ENCODE measurements at regions of chr3 and their contacts with region 1.

Region 1: GRCh38 chr3:172675441-172676193 is 35.2 kb downstream of the NCEH1 start:
- DNase-seq: no peak
- H3K4me3 ChIP-seq: no peak overlapping the region
- H3K27ac ChIP-seq: no peak overlapping the region
- H3K4me1 ChIP-seq: peaks cover 0 to 27% (median 11%) of the 10 kb centered on the region in 4 donors
- H3K27me3 ChIP-seq: no peaks in the 10 kb centered on the region
- CTCF ChIP-seq: peak; percentile 67 to 81 (median 78)
- EP300 ChIP-seq: no peak
- POLR2A ChIP-seq: no peak

Region 2: DNA sequence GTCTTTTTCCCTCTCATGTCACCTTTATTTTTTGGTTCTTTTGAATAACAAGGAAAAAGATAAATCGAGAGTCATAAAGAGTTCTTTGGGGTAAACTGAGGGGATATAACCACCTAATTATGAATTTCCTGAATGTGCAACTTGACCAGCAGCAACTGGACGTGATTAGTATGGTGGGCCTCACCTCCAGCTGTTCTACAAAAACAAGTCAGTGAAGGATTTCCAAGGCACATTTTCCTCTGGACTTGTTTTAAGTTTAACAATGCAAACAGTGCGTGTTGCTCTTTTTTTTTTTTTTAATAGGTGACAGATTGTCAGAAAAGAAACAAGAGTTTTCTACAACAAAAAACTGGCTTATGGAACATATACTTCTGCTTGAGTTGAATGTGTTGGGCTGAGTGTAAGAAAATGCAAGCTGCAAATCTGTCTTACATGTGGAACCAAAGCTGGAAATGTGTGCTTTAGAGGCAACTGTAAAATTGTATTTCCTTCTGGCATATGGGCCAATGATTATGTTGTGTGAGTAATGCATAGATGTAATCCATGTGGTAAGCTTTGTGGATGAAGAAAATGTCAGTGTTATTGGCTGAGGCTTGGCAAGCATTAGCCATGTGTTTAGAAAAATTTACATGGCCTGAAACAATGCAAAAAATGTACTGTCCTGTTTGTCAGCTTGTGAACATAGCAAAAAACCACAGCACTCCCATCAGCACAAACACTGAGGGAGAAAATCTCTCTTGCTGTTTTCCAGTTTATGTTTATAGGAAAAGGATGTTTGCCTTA is 680.8 kb before region 1 on chr3:
- in situ Hi-C with region 1: no loop called
- intact Hi-C with region 1: no loop called
- DNase-seq: no peak
- H3K4me3 ChIP-seq: no peak overlapping the region
- H3K27ac ChIP-seq: no peak overlapping the region
- H3K4me1 ChIP-seq: peaks cover 0 to 10% (median 2%) of the 10 kb centered on the region in 4 donors
- H3K27me3 ChIP-seq: no peaks in the 10 kb centered on the region
- CTCF ChIP-seq: no peak
- EP300 ChIP-seq: no peak
- POLR2A ChIP-seq: no peak

Region 3: DNA sequence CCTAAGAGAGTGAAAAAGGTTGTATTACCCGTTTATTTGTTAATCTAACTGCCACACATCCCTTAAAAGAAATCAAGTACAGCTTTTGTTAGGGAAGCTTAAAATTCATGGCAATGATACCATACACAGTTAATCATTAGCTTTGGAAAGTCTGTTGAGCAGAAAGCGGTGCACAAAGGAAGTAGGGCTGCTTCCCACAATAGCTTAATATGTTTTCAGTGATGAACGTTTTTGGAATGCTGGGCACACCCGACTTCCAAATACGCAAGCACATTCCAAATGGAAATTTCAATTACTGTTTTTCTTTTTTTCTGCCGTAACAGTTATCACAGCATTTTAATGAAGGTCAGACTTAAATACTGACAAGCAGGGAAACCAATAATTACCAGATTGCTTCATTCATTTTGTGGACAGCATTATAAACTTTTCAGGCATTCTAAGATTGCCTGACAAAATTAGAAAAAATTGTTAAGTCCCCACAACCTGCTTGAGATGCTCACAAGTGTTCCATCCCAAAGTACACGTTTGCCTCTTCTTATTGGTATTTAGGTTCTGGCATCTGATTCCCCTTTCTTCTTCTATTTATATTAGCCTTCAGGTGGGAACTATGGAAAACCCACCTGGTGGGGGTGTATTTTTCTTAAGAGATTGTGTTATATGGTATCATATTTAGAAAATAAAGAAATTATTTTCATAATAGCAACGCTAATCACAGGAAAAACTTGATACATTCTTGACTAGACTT is 73.8 kb after region 1 on chr3:
- in situ Hi-C with region 1: no loop called
- intact Hi-C with region 1: loop called (anchors 2 kb)
- DNase-seq: no peak
- H3K4me3 ChIP-seq: peak overlapping the region in 2 of 4 donors; percentile 81 to 100
- H3K27ac ChIP-seq: peak overlapping the region; percentile 65 to 87 (median 81)
- H3K4me1 ChIP-seq: peaks cover 3 to 25% (median 10%) of the 10 kb centered on the region in 4 donors
- H3K27me3 ChIP-seq: no peaks in the 10 kb centered on the region
- CTCF ChIP-seq: no peak
- EP300 ChIP-seq: no peak
- POLR2A ChIP-seq: no peak

Region 4: DNA sequence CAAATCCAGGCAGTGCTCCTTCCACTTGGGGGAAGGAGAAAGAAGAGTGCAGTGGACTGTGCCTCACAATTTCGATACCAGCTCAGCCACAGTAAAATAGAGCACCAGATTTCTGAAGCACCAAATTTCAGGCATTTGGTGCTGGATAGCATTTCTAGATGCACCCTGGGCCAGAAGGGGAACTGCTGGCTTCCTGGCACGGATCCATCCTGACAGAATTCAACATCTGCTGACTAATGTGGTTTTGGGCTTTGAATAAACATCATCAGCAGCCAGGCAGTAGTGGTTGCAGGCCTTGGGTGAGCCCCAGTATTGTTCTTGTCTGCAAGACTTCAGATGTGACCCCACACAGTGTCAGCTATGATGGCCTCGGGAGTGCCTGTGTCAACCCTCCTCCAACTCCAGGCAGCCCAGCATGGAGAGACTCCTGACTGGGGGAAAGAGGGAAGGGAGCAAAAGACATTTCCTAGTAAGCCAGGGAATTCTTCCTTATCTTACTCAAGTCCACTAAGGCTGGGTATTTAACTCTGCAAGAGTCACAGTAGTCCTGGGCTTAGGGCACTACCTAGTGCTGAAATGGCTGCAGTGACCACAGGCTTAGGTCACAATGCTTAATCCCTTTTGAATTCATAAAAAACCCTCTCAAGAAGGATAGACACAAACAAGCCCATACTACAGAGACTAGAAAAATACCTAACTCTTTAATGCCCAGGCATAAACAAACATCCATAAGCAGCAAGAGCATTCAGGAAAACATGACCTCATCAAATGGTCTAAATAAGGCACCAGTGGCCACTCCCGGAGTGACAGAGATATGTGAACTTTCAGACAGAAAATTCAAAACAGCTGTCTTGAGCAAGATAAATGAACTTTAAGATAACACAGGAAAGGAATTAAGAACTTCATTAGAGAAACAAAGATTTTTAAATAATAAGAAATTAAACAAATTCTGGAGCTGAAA is 390.7 kb after region 1 on chr3:
- in situ Hi-C with region 1: no loop called
- intact Hi-C with region 1: no loop called
- DNase-seq: no peak
- H3K4me3 ChIP-seq: no peak overlapping the region
- H3K27ac ChIP-seq: no peak overlapping the region
- H3K4me1 ChIP-seq: no peaks in the 10 kb centered on the region
- H3K27me3 ChIP-seq: no peaks in the 10 kb centered on the region
- CTCF ChIP-seq: no peak
- EP300 ChIP-seq: no peak
- POLR2A ChIP-seq: no peak

Region 5: DNA sequence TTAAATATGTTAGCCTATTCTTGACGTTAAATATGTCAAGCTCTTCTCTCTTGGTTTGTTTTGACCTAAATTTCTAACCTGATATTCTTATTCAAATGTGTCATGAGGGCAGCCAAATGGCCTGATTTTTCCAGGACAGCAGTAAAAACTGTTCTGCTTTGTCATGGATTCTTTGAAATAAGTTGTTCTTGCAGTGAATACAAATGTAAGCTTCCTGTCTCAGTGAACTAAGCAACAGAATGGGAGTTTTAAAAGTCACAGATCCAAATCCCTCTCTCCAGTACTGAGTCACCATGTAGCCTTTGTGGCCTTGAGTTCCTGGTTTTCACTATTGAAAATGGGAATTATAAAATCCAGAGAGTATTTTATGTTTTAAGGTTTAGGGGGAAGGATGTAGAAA is 1023.7 kb after region 1 on chr3:
- in situ Hi-C with region 1: no loop called
- intact Hi-C with region 1: no loop called
- DNase-seq: no peak
- H3K4me3 ChIP-seq: no peak overlapping the region
- H3K27ac ChIP-seq: no peak overlapping the region
- H3K4me1 ChIP-seq: no peaks in the 10 kb centered on the region
- H3K27me3 ChIP-seq: no peaks in the 10 kb centered on the region
- CTCF ChIP-seq: no peak
- EP300 ChIP-seq: no peak
- POLR2A ChIP-seq: no peak

Measured in transverse colon (tissue), 4 donors.